PC-9 (cell line): ENCODE measurements at regions of chr2 and their contacts with region 1.

Region 1: DNA sequence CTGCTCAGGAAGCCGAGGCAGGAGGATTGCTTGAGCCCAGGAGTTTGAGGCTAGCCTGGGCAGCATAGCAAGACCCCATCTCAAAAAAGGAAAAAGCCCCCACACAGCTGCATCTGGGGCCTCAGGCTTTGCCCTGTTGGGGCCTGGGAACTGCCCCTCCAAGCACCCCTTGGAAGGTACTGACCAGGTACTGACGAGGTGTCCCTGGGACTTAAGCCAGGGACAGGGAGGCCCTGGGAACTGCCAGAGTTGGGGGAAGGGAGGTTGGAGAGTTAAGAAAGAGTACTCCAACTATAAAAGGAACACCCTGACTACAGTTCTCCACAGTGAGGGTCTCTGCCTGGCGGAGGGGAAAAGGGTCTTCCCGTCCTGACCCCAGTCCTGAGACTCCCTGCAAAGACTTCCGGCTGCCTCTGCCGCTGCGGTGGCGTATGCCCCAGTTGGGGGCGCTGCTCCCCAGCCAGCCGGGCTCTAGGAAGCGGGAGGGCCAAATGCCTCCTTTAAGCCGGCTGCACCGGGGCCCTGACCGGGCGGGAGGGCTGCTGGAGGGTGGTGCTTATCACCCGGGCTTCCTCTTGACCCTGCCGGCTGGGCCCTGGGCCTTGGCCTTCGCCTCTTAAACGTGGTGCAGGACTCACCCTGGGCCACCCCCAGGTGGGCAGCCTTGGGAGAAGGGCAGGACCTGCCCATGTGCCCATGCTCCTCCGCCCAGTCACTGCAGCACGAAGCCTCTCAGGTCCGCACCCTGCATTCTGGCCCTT is 12.8 kb downstream of the SLC30A3 start:
- DNase-seq: peak in 1 of 2 experiments; percentile 50
- H3K4me3 ChIP-seq: no peak overlapping the region
- H3K27ac ChIP-seq: no peak overlapping the region
- H3K4me1 ChIP-seq: no peaks in the 10 kb centered on the region
- H3K27me3 ChIP-seq: no peaks in the 10 kb centered on the region; the same call in 1 of the 2 replicates
- CTCF ChIP-seq: peak; percentile 72

Region 2: DNA sequence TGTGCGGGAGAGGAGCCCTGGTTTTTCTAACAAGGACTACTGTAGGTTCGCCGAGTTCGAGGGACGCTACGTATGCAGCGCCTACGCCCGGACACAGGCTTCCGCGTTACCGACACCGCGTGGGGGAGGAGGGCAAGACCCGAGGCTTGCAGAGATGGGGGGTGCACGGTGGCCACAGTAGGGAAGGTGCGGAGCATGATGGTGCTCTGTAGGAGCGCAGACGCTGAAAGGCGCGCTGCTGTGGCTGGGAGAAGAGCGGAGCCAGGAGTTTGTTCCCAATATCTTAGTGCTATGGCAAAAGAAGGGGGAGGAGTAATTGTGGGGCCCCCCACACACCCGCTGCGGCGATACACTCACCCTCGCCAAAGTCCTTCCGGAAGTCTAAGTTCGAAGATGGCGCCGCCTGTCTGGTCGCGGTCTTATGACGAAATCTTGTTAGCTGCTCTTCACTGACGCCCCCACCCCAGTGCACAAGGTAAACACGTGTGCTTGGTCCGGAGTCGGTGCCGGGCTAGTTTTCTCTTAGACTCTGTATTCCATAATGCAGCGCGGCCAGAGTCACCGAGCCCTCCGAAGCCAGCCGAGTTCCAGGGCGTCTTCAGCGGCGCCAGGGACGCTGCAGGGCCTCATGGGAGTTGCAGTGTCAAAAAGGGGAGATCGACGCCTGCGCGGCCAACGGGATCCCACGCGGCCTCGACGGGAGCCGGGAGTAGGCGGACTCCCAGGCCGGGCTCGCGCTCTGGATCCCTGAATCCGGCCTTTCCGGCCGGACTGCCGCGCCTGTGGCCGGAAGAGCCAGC is 106.5 kb after region 1 on chr2 and contains the start of gene GTF3C2:
- CTCF ChIA-PET with region 1: interaction called, 10 read pairs
- POLR2A ChIA-PET with region 1: no interaction called
- intact Hi-C with region 1: no loop called
- DNase-seq: peak; percentile 91 to 95
- H3K4me3 ChIP-seq: peak within 1 kb of the TSS; percentile 69
- H3K27ac ChIP-seq: peak within 1 kb of the TSS; percentile 90
- H3K4me1 ChIP-seq: peaks cover 31% of the 10 kb centered on the region
- H3K27me3 ChIP-seq: no peaks in the 10 kb centered on the region
- CTCF ChIP-seq: no peak
- total RNA-seq, gene GTF3C2: 57.5 and 69.8 TPM in 2 replicates